PC-9 (cell line): ENCODE measurements at regions of chr4 and their contacts with region 1.

Region 1: DNA sequence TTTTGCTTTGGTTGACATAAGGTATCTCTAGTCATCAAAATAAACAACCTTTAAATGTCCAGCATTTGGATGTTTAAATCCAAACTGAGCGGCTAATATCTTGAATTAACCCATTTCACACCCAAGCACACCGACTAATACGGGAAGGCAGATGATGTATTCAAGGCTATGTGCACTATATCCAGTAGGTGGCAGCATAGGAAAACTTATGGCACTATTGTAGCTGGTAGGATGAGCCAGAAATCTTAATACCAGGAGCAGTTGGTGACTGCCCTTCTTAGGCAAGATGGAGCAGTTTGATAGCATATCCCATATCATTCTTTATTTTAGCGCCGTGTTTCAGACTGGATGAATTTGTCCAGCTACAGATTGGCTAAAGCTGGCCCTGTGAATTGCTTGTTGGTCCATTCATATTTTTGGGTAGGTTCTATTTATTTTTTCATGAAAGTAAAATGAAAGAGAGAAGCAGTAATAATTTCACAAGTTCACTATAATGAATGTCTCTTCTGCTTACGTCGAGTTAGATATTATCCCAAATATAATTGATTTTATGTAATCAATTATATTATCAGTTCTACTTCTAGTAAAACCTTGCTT is 24.4 kb downstream of the UCHL1 start:
- DNase-seq: peak; percentile 48 to 72
- H3K4me3 ChIP-seq: no peak overlapping the region
- H3K27ac ChIP-seq: no peak overlapping the region
- H3K4me1 ChIP-seq: peaks cover 23% of the 10 kb centered on the region
- H3K27me3 ChIP-seq: no peaks in the 10 kb centered on the region
- CTCF ChIP-seq: peak; percentile 91

Region 2: DNA sequence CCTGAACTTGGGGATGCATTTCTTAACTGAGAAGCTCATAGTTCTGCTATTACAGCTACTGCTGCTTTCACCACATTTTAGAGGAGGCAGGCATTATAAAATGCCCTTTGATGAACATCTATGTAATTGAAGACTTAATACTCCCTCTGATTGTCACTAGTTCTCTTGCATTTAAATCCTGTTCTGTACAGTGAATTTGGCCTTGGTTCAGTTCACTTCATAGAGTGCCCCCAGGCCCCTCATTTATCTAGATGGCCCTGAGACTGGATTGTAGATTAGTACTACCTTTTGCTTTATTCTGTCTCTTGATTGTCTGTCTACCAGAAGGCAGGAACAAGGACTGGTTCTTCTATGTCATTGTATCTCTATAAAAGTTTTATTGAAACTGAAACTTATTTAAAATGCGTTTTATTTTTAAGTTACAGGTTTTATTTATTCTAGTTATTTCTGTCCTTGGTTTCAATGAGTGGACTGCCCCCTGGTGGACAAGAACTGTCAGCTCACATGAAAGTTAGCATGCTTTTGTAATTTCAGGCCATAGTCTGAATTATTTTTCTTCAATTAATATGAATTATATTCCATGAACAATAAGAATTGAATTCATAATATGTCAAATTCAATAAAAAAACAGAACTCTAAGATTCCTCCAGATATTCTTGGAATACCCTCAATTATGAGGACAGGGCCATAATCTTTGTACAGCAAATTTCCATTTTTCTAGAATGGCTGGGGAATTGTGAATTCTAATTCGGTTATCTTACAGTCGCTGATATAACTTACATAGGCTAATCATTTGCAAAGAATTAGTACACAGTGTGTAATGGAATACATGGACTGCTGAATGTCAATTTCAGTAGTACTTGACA is 606.9 kb after region 1 on chr4:
- CTCF ChIA-PET with region 1: no interaction called
- POLR2A ChIA-PET with region 1: no interaction called
- intact Hi-C with region 1: loop called (anchors 1 kb)
- DNase-seq: peak in 1 of 2 experiments; percentile 24
- H3K4me3 ChIP-seq: no peak overlapping the region
- H3K27ac ChIP-seq: no peak overlapping the region
- H3K4me1 ChIP-seq: peaks cover 15% of the 10 kb centered on the region
- H3K27me3 ChIP-seq: no peaks in the 10 kb centered on the region
- CTCF ChIP-seq: peak; percentile 95